Motor neuron (in vitro differentiated cells): ENCODE measurements at regions of chr7 and their contacts with region 1.

Region 1: GRCh38 chr7:87312215-87312865 is 33.1 kb upstream of the CROT start:
- ATAC-seq: peak; percentile 47 to 90 (median 66)
- H3K4me3 ChIP-seq: no peak overlapping the region
- H3K27ac ChIP-seq: no peak overlapping the region
- H3K4me1 ChIP-seq: no peaks in the 10 kb centered on the region

Region 2: GRCh38 chr7:86991771-86992191 is 320.6 kb before region 1 on chr7:
- in situ Hi-C with region 1: no loop called
- ATAC-seq: peak in 1 of 8 experiments; percentile 63
- H3K4me3 ChIP-seq: no peak overlapping the region
- H3K27ac ChIP-seq: no peak overlapping the region
- H3K4me1 ChIP-seq: peaks cover 0 to 11% of the 10 kb centered on the region in 2 donors

Region 3: DNA sequence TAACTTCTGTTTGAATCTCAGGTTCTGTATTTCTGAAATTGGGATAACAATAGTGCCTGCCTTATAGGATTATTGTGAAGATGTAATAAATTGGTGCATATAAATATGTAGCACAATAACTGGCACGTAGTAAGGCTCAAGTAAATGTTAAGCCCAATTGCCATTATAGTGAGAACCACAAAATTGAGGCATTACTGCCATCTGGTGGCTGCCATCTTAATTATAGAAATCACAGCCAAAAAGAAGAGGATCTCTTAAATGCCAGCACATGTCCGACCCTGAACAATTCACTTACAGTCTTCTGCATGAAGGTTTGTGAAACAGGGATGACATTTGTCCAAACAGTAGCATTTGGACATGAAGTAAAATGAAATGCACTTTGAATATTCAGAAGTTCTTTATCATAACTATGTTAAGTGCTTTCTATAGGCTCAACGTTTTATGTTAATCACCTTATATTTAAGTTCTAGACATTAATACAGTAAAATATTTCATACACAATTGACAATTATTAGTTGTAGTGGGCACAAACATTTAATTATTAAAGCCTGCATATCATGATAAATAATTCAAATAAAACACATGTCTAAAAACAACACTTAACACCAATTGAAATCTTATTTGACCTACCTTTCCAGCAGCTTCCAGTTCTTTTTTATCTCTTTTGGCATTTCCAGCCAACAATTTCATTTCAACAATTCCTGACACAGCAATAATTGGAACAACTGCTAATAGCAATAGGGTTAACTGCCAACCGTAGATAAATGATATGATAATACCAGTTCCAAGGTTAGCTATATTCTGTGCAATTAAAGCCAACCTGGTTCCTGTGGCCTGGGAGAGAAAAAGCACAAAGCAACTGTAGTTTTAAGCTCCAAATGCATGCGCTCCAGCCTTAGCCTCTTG is 104.6 kb after region 1 on chr7:
- in situ Hi-C with region 1: loop called in 4 of 9 experiments (anchors 10 to 25 kb)
- ATAC-seq: peak in 7 of 8 experiments; percentile 35 to 74 (median 55)
- H3K4me3 ChIP-seq: no peak overlapping the region
- H3K27ac ChIP-seq: no peak overlapping the region
- H3K4me1 ChIP-seq: no peaks in the 10 kb centered on the region

Region 4: GRCh38 chr7:87426160-87426559 is 113.8 kb after region 1 on chr7:
- in situ Hi-C with region 1: loop called in 2 of 9 experiments (anchors 10 to 25 kb)
- ATAC-seq: no peak
- H3K4me3 ChIP-seq: no peak overlapping the region
- H3K27ac ChIP-seq: no peak overlapping the region
- H3K4me1 ChIP-seq: no peaks in the 10 kb centered on the region